Prostate gland (tissue), 2 donors: ENCODE measurements at regions of chr5 and their contacts with region 1.

Region 1: DNA sequence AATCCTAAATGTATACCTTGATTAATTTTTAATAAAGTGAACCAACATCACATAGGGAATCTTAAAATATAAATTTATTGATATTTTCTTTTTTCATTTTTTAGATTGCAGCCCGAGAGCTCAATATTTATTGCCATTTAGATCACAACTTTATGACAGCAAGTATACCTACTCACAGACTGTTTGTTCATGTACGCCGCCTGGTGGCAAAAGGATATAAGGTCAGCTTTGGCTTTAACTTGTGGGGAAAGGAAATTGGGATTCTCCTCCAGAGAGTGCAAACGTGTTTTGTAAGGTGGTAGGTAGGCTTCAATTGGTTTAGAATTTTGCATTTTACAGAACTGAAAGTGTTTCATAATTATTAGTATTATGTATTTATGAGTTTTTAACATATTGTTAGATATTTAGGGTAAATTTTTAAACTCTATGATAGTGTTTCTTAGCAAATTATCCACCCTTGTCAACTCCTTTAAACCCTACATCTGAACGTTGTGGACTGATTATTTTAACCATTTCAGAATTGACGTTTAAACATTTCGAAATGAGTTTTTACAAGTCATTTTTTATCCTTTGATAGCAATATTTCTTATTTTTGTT is 17.5 kb upstream of the DHFR start:
- DNase-seq: peak; percentile 70
- H3K4me3 ChIP-seq: no peak overlapping the region
- H3K27ac ChIP-seq: no peak overlapping the region
- H3K4me1 ChIP-seq: no peaks in the 10 kb centered on the region
- H3K27me3 ChIP-seq: no peaks in the 10 kb centered on the region
- CTCF ChIP-seq: peak; percentile 43 to 83 (median 66)
- POLR2A ChIP-seq: no peak

Region 2: DNA sequence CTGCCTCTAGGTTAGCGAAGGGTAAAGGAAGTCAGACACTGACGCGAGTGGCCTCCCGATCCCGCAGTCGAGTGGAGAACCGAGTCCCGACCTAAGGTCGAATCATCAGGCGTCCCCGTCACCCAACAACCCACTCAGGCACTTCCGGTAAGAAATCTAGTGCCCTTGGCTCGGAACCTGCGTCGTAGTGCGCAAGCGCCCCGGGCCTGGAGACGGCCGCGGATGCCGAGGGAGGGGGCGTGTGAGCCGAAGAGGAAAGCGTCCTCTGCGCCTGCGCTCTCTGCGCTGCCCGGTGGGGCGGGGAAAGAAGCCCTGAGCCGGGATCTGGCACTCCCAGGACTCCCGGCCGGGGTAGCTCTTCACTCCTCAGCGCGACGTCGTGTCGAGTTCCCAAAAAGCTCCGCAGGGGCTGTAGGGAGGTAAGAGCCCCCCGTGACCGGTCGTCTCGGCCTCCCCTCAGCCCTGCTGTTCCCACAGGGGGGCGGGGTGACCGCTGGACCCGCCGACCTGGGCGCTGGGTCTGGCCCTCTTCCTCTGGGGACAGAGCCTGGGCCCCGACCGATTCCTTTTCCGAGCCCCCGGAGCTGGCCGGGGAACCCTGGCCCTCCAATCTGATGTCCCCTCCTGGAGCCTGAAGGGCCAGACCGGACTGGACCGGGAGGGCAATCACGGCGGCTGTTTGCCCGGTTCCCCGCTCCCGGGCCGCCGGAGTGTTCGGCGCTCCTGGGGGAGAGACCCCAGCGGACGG is 264.3 kb before region 1 on chr5 and contains the start of gene ZFYVE16:
- intact Hi-C with region 1: loop called (anchors 10 kb)
- DNase-seq: peak; percentile 98
- H3K4me3 ChIP-seq: peak within 1 kb of the TSS; percentile 90 to 94
- H3K27ac ChIP-seq: peak within 1 kb of the TSS; percentile 95 to 97
- H3K4me1 ChIP-seq: no peaks in the 10 kb centered on the region
- H3K27me3 ChIP-seq: no peaks in the 10 kb centered on the region
- CTCF ChIP-seq: peak in 2 of 4 experiments; percentile 48 to 57
- POLR2A ChIP-seq: peak; percentile 86
- total RNA-seq, gene ZFYVE16: 29.4 to 41.1 TPM

Region 3: GRCh38 chr5:80487829-80488721 is 184.2 kb before region 1 on chr5 and contains the start of gene FAM151B:
- intact Hi-C with region 1: loop called (anchors 5 kb)
- DNase-seq: peak; percentile 94
- H3K4me3 ChIP-seq: peak within 1 kb of the TSS; percentile 53 to 64
- H3K27ac ChIP-seq: peak within 1 kb of the TSS; percentile 82 to 88
- H3K4me1 ChIP-seq: no peaks in the 10 kb centered on the region
- H3K27me3 ChIP-seq: no peaks in the 10 kb centered on the region
- CTCF ChIP-seq: peak in 1 of 4 experiments; percentile 44
- POLR2A ChIP-seq: peak; percentile 52
- total RNA-seq, gene FAM151B: 3.2 to 3.3 TPM

Region 4: GRCh38 chr5:80852331-80853245 is 180.3 kb after region 1 on chr5:
- intact Hi-C with region 1: no loop called
- DNase-seq: no peak
- H3K4me3 ChIP-seq: no peak overlapping the region
- H3K27ac ChIP-seq: no peak overlapping the region
- H3K4me1 ChIP-seq: no peaks in the 10 kb centered on the region
- H3K27me3 ChIP-seq: no peaks in the 10 kb centered on the region
- CTCF ChIP-seq: no peak
- POLR2A ChIP-seq: no peak